OCI-LY7 (cell line): ENCODE measurements at regions of chr2 and their contacts with region 1.

Region 1: DNA sequence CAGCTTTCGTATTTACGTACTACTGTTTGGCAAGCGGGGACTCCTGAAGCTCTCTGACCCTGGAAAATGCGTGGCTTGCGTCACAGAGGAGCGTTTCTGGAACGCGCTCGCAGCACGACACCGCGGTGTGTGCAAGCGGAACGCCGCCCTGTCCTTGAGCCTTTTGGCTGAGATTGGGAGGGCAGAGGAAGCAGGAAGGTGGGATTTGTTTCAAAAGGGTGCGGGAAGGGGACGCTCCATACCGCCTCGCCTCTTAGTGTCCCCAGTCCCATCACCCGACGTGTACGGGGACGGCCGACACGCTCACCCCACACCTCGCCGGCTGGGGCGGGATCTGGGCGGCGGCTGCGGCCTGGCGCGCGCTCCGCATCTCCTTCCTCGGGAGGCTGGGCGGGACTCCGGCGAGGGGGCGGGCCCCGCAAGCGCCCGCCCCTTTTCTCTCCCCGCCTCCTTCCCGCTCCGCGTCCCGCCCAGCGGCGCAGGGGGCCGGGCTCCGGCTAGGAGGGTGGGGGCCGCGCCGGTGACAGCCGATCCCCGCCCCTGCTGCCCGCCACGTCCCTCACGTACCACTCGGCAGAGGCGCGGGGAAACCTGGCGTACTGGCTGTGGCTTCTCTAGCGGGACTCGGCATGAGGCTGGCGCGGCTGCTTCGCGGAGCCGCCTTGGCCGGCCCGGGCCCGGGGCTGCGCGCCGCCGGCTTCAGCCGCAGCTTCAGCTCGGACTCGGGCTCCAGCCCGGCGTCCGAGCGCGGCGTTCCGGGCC is at the start of gene PDK1:
- DNase-seq: peak; percentile 89
- H3K4me3 ChIP-seq: peak within 1 kb of the TSS; percentile 90
- H3K27ac ChIP-seq: peak within 1 kb of the TSS; percentile 77
- H3K4me1 ChIP-seq: peaks cover 27% of the 10 kb centered on the region
- CTCF ChIP-seq: no peak
- total RNA-seq, gene PDK1: 26.0 and 29.3 TPM in 2 replicates

Region 2: GRCh38 chr2:170928824-170929685 is 1626.6 kb before region 1 on chr2 and contains the start of gene GORASP2:
- CTCF ChIA-PET with region 1: no interaction called
- POLR2A ChIA-PET with region 1: no interaction called
- intact Hi-C with region 1: loop called (anchors 2 kb)
- DNase-seq: peak; percentile 100
- H3K4me3 ChIP-seq: peak within 1 kb of the TSS; percentile 75
- H3K27ac ChIP-seq: peak within 1 kb of the TSS; percentile 68
- H3K4me1 ChIP-seq: peaks cover 38% of the 10 kb centered on the region
- CTCF ChIP-seq: peak; percentile 86
- total RNA-seq, gene GORASP2: 30.7 and 44.2 TPM in 2 replicates

Region 3: GRCh38 chr2:172404824-172405223 is 150.9 kb before region 1 on chr2:
- CTCF ChIA-PET with region 1: no interaction called
- POLR2A ChIA-PET with region 1: no interaction called
- intact Hi-C with region 1: no loop called
- DNase-seq: no peak
- H3K4me3 ChIP-seq: no peak overlapping the region
- H3K27ac ChIP-seq: no peak overlapping the region
- H3K4me1 ChIP-seq: no peaks in the 10 kb centered on the region
- CTCF ChIP-seq: no peak

Region 4: GRCh38 chr2:172437419-172438341 is 118.0 kb before region 1 on chr2:
- CTCF ChIA-PET with region 1: no interaction called
- POLR2A ChIA-PET with region 1: no interaction called
- intact Hi-C with region 1: no loop called
- DNase-seq: peak; percentile 35
- H3K4me3 ChIP-seq: peak overlapping the region; percentile 36
- H3K27ac ChIP-seq: no peak overlapping the region
- H3K4me1 ChIP-seq: peaks cover 11% of the 10 kb centered on the region
- CTCF ChIP-seq: no peak